GM13977 (cell line): ENCODE measurements at regions of chr6 and their contacts with region 1.

Region 1: DNA sequence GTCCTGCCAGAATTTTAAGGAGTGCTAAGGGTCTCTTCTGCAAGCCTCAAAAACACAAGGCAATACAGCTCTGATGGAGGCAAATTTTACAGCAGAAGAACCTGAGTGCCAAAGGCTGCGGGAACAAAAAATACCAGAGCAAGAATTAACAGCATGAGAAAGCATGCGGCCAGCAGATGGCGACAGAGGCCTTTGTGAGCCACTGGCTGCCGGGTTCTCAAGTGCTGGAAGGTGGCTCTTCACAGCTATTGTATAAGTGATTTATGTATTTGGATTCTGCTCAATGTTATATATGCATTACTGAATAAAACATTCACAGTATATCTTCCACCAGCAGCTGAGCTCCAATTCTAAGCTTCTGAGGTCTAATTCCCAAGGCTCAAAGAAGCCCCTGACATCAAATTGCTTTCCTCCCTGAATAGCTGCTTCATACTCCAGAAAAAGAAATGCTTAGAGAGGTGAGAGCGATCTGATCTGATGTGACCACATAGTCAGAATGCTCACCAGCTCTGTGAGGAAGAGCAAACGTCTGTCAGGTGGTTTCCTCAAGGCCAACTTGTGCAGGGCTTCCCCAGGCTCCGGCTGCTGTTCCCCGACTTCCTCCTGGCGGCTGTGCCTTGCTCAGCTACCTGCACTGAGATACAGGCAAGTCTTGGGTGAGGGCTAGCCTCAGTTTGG is 58.6 kb downstream of the PPP1R3G start:
- DNase-seq: peak; percentile 77
- CTCF ChIP-seq: peak; percentile 95

Region 2: GRCh38 chr6:4973982-4974745 is 169.6 kb before region 1 on chr6:
- in situ Hi-C with region 1: no loop called
- DNase-seq: no peak
- CTCF ChIP-seq: no peak

Region 3: GRCh38 chr6:5401845-5402738 is 258.3 kb after region 1 on chr6:
- in situ Hi-C with region 1: loop called (anchors 10 kb)
- DNase-seq: no peak
- CTCF ChIP-seq: peak; percentile 52